PC-3 (cell line): ENCODE measurements at regions of chr13 and their contacts with region 1.

Region 1: GRCh38 chr13:77521595-77522367 is 13.7 kb upstream of the SCEL start:
- DNase-seq: peak; percentile 92
- ATAC-seq: peak; percentile 95
- H3K4me3 ChIP-seq: peak overlapping the region; percentile 45; the same call in 1 of the 2 replicates
- H3K27ac ChIP-seq: peak overlapping the region; percentile 92
- H3K4me1 ChIP-seq: peaks cover 48% of the 10 kb centered on the region
- H3K27me3 ChIP-seq: no peaks in the 10 kb centered on the region
- CTCF ChIP-seq: no peak

Region 2: GRCh38 chr13:76976490-76976889 is 545.3 kb before region 1 on chr13:
- CTCF ChIA-PET with region 1: no interaction called
- POLR2A ChIA-PET with region 1: no interaction called
- intact Hi-C with region 1: no loop called
- DNase-seq: no peak
- ATAC-seq: no peak
- H3K4me3 ChIP-seq: no peak overlapping the region
- H3K27ac ChIP-seq: no peak overlapping the region
- H3K4me1 ChIP-seq: no peaks in the 10 kb centered on the region
- H3K27me3 ChIP-seq: no peaks in the 10 kb centered on the region
- CTCF ChIP-seq: no peak

Region 3: DNA sequence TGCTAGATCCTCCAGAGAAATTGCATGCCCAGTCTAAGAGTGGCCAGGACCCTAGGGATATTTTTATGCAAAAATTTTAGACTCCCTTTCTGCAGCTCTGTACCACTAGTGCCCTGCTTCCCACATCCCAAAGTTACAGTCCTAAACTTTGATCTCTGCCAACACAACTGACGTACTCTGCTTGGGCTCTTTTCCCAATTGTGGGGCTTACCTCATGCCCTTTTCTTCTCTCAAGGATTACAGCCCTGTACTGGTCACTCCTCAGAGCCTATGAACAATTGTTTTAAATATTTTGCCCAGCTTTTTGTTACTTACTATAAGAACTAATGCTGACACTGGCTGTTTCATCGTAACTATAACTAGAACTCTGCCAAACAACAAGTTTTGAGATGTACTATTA is 437.0 kb before region 1 on chr13:
- CTCF ChIA-PET with region 1: no interaction called
- POLR2A ChIA-PET with region 1: no interaction called
- intact Hi-C with region 1: no loop called
- DNase-seq: no peak
- ATAC-seq: no peak
- H3K4me3 ChIP-seq: no peak overlapping the region
- H3K27ac ChIP-seq: no peak overlapping the region
- H3K4me1 ChIP-seq: no peaks in the 10 kb centered on the region
- H3K27me3 ChIP-seq: no peaks in the 10 kb centered on the region
- CTCF ChIP-seq: no peak

Region 4: DNA sequence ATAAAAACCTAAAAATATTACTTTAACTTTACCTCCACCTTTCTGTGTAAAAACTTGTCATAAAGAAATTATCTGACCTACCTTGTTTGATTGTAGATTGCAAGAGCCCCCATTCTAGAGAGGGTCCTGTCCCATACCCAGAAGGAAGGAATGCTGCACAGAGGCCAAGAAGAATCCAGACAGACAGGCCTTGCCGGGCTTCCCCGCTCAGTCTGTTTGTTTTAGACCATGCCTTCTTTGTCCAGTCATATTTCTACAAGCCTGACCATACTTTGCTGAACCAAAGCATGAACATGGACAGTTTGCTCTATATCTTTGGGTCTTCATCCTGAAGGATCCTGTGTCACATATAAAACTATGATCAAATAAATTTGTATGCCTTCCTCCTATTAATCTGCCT is 99.1 kb before region 1 on chr13:
- CTCF ChIA-PET with region 1: no interaction called
- POLR2A ChIA-PET with region 1: no interaction called
- intact Hi-C with region 1: loop called (anchors 5 kb)
- DNase-seq: peak; percentile 35
- ATAC-seq: no peak; the same call in 1 of the 2 replicates
- H3K4me3 ChIP-seq: no peak overlapping the region
- H3K27ac ChIP-seq: no peak overlapping the region
- H3K4me1 ChIP-seq: peaks cover 24% of the 10 kb centered on the region
- H3K27me3 ChIP-seq: no peaks in the 10 kb centered on the region
- CTCF ChIP-seq: no peak

Region 5: GRCh38 chr13:77506874-77507273 is 14.9 kb before region 1 on chr13:
- CTCF ChIA-PET with region 1: interaction called, 5 read pairs
- POLR2A ChIA-PET with region 1: no interaction called
- intact Hi-C with region 1: loop called (anchors 1 kb)
- DNase-seq: peak; percentile 30
- ATAC-seq: no peak
- H3K4me3 ChIP-seq: no peak overlapping the region
- H3K27ac ChIP-seq: peak overlapping the region; percentile 50; the same call in 1 of the 2 replicates
- H3K4me1 ChIP-seq: peaks cover 32% of the 10 kb centered on the region
- H3K27me3 ChIP-seq: no peaks in the 10 kb centered on the region
- CTCF ChIP-seq: peak; percentile 52; the same call in 1 of the 2 replicates

Region 6: GRCh38 chr13:77537289-77537919 is 15.6 kb after region 1 on chr13:
- CTCF ChIA-PET with region 1: interaction called, 3 read pairs
- POLR2A ChIA-PET with region 1: no interaction called
- intact Hi-C with region 1: loop called (anchors 1 kb)
- DNase-seq: peak; percentile 83
- ATAC-seq: peak; percentile 74
- H3K4me3 ChIP-seq: peak overlapping the region; percentile 45; the same call in 1 of the 2 replicates
- H3K27ac ChIP-seq: peak overlapping the region; percentile 65
- H3K4me1 ChIP-seq: peaks cover 56% of the 10 kb centered on the region
- H3K27me3 ChIP-seq: no peaks in the 10 kb centered on the region
- CTCF ChIP-seq: no peak

Region 7: GRCh38 chr13:77565635-77566034 is 43.9 kb after region 1 on chr13:
- CTCF ChIA-PET with region 1: interaction called, 3 read pairs
- POLR2A ChIA-PET with region 1: no interaction called
- intact Hi-C with region 1: loop called (anchors 1 kb)
- DNase-seq: peak; percentile 66
- ATAC-seq: peak; percentile 67
- H3K4me3 ChIP-seq: no peak overlapping the region
- H3K27ac ChIP-seq: no peak overlapping the region
- H3K4me1 ChIP-seq: 0 out of 2 replicates have a peak, but pooled peaks cover 3% of the 10 kb centered on the region
- H3K27me3 ChIP-seq: no peaks in the 10 kb centered on the region
- CTCF ChIP-seq: peak; percentile 73